ENCODE measurements at regions of chr1 and their contacts with region 1.

Region 1: GRCh38 chr1:92291372-92291999 is 7.3 kb downstream of the GLMN start:
- DNase-seq: peak; percentile 75
- H3K4me3 ChIP-seq: no peak overlapping the region
- H3K27ac ChIP-seq: no peak overlapping the region
- H3K4me1 ChIP-seq: no peaks in the 10 kb centered on the region
- H3K27me3 ChIP-seq: no peaks in the 10 kb centered on the region
- CTCF ChIP-seq: peak; percentile 59 to 62
- POLR2A ChIP-seq: no peak

Region 2: DNA sequence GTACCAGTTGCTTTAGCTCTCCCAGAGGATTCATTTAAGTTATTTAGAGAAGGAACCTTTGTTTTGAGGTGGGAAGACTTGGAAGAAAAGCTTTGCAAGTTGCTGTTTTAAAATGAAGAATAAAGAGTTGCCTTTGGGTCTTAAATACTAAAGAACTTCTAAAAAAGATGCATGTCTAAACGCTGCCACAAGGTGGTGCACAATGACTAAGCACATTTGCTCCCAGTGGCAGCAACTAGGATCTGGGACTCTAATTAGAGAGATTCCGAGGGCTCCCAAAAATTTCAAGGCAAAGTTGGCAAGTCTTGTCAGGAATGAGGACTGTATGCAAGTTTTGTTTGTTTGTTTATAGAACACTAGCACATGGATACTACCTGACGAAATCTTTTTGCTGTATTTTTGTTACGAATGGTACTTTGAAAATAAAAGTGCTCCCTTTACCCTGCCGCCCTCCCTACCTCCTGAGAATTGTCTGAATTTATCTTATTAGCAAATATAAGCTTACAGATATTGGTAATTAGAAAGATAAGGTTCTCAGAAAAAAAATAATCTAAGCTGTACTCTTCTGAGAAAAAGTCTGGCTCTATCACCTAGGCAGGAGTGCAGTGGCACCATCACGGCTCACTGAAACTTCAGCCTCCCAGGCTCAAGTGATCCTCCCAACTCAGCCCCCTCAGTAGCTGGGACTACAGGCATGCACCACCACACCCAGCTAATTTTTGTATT is 1008.6 kb before region 1 on chr1:
- CTCF ChIA-PET with region 1: interaction called, 8 read pairs
- POLR2A ChIA-PET with region 1: no interaction called
- dilution Hi-C with region 1: no loop called
- intact Hi-C with region 1: loop called (anchors 1 kb)
- DNase-seq: peak; percentile 69
- H3K4me3 ChIP-seq: no peak overlapping the region
- H3K27ac ChIP-seq: no peak overlapping the region
- H3K4me1 ChIP-seq: no peaks in the 10 kb centered on the region
- H3K27me3 ChIP-seq: peaks cover 5 to 7% of the 10 kb centered on the region in 2 experiments
- CTCF ChIP-seq: peak; percentile 64 to 66
- POLR2A ChIP-seq: no peak

Region 3: GRCh38 chr1:91924146-91924545 is 367.3 kb before region 1 on chr1:
- CTCF ChIA-PET with region 1: interaction called, 91 read pairs
- POLR2A ChIA-PET with region 1: no interaction called
- dilution Hi-C with region 1: no loop called
- intact Hi-C with region 1: loop called (anchors 1 kb)
- DNase-seq: peak; percentile 37
- H3K4me3 ChIP-seq: no peak overlapping the region
- H3K27ac ChIP-seq: no peak overlapping the region
- H3K4me1 ChIP-seq: peaks cover 2% of the 10 kb centered on the region
- H3K27me3 ChIP-seq: no peaks in the 10 kb centered on the region
- CTCF ChIP-seq: no peak
- POLR2A ChIP-seq: no peak

Region 4: DNA sequence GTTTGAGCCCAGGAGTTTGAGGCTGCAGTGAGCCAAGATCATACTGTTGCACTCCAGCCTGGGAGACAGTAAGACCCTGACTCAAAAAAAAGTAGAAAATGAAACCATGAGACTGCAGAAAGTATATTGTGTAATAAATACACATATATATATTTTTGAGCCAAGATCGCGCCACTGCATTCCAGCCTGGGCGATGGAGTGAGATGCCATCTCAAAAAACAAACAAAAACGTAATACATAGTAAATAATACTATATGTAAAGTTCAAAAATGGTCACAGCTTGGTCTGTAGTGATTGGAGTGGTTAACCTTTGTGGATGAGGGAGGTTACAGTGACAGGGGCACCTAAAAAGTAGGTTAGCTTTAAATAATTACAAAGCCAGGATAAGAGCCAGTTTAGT is 332.5 kb before region 1 on chr1:
- CTCF ChIA-PET with region 1: no interaction called
- POLR2A ChIA-PET with region 1: no interaction called
- dilution Hi-C with region 1: no loop called
- intact Hi-C with region 1: no loop called
- DNase-seq: no peak
- H3K4me3 ChIP-seq: no peak overlapping the region
- H3K27ac ChIP-seq: no peak overlapping the region
- H3K4me1 ChIP-seq: no peaks in the 10 kb centered on the region
- H3K27me3 ChIP-seq: no peaks in the 10 kb centered on the region
- CTCF ChIP-seq: no peak
- POLR2A ChIP-seq: no peak

Region 5: DNA sequence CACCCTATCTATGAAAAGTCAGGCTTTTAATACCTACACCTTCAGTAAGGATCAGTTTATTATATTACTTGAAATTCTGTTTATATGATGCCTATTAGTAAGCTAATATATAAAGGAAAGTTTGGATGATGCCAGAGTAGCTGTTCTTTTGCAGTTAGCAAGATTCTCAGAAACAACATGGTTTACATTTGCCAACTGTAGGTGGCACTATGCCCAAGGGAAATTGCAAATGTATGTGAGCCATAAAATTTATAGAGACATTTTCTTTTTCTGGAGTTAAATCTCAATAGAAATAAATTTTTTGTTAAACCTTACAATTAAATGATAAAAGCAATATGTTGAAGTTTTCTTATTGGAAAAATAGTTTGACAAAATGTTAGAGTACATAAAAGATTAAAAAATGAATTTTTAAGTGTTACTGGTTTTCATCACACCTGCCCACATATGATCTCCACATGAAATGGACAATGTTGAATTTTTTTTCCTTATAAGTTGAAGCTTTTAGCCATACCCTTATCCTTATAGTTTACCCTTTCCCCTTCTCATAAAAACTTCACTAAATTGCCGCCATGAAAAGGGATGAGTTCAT is 293.8 kb before region 1 on chr1:
- CTCF ChIA-PET with region 1: interaction called, 232 read pairs
- POLR2A ChIA-PET with region 1: no interaction called
- dilution Hi-C with region 1: no loop called
- intact Hi-C with region 1: loop called (anchors 1 kb)
- DNase-seq: peak; percentile 59
- H3K4me3 ChIP-seq: no peak overlapping the region
- H3K27ac ChIP-seq: no peak overlapping the region
- H3K4me1 ChIP-seq: no peaks in the 10 kb centered on the region
- H3K27me3 ChIP-seq: no peaks in the 10 kb centered on the region
- CTCF ChIP-seq: peak; percentile 48 to 51
- POLR2A ChIP-seq: no peak

Region 6: DNA sequence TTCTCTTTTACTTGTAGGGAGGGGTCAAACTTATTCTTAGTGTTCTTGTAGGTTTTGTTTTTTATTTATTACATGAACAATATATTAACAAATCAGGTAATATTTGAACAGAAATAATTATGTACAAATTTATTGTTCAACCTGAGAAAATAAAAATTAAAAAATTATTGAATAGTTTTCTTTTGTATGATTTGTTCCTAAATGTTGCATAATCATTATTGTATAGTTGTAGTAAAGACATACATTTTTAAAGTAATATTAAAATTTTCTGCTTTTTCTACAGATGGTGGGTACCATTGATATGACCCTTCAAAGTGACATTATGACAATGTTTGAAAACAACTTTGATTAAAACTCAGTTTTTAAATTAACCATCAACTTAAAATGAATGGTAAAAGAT is 277.6 kb before region 1 on chr1:
- CTCF ChIA-PET with region 1: interaction called, 15 read pairs
- POLR2A ChIA-PET with region 1: no interaction called
- dilution Hi-C with region 1: no loop called
- intact Hi-C with region 1: no loop called
- DNase-seq: no peak
- H3K4me3 ChIP-seq: no peak overlapping the region
- H3K27ac ChIP-seq: no peak overlapping the region
- H3K4me1 ChIP-seq: no peaks in the 10 kb centered on the region
- H3K27me3 ChIP-seq: no peaks in the 10 kb centered on the region
- CTCF ChIP-seq: no peak
- POLR2A ChIP-seq: no peak

Region 7: DNA sequence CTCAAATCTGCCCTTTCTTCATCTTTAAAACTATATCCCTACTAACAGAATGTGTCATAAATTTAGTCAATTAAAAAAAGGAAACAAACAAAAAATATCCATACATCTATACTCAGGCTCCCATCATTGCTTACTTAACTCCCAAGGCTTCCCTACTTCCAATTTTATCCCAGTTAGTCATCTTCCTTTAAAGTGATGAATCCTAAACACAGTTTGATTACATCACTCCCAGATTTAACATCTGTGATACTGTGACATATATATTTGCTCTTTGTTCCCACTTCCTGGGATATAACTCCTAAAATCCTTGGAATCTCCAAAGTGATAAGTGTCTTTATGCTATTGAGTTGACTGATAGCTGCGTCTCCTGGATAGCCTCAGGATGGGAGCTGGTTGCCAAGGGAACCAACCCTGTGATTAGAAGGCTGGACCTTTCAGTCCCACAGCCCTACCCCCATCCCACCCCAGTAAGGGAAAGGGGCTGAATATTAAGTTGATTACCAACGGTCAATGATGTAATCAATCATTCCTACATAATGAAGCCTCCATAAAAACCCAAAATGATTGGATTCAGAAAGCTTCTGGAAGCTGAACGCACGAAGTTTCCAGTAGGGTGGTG is 14.3 kb before region 1 on chr1:
- CTCF ChIA-PET with region 1: interaction called, 37 read pairs
- POLR2A ChIA-PET with region 1: no interaction called
- dilution Hi-C with region 1: no loop called
- intact Hi-C with region 1: no loop called
- DNase-seq: peak; percentile 55
- H3K4me3 ChIP-seq: no peak overlapping the region
- H3K27ac ChIP-seq: peak overlapping the region; percentile 75
- H3K4me1 ChIP-seq: peaks cover 20% of the 10 kb centered on the region
- H3K27me3 ChIP-seq: no peaks in the 10 kb centered on the region
- CTCF ChIP-seq: no peak
- POLR2A ChIP-seq: no peak

Region 8: DNA sequence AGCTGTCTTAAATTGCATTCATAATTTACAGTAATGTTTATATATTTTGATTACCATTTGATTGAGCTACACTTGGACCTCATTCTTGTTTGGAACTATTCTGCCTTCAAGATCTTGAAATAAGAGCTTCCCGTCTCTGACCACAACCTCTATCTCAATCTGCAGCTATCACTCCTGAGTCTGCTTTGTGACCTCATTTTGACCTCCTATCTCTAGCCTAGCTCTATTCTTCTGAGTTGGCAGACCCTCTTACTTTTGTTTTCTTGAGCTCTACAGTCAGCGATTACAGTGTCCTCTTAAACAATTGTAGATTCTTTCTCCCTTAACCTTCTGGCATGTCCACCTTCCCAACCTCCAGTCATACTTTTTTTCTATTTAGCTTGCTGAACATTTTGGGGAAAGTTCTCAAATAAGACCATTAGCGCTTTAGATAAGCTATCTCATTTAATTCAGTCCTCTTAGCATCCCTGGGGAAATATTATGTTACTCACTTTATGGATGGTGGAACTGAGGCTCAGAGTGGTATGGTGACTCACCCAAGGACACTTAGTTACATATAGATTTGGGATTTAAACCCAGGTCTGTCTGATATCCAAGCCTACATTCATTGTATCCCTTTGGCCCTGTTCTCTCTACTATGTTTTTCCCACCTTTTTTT is 26.5 kb after region 1 on chr1:
- CTCF ChIA-PET with region 1: interaction called, 10 read pairs
- POLR2A ChIA-PET with region 1: no interaction called
- dilution Hi-C with region 1: no loop called
- intact Hi-C with region 1: no loop called
- DNase-seq: peak; percentile 96
- H3K4me3 ChIP-seq: no peak overlapping the region
- H3K27ac ChIP-seq: no peak overlapping the region
- H3K4me1 ChIP-seq: peaks cover 7% of the 10 kb centered on the region
- H3K27me3 ChIP-seq: no peaks in the 10 kb centered on the region
- CTCF ChIP-seq: no peak
- POLR2A ChIP-seq: no peak

Region 9: DNA sequence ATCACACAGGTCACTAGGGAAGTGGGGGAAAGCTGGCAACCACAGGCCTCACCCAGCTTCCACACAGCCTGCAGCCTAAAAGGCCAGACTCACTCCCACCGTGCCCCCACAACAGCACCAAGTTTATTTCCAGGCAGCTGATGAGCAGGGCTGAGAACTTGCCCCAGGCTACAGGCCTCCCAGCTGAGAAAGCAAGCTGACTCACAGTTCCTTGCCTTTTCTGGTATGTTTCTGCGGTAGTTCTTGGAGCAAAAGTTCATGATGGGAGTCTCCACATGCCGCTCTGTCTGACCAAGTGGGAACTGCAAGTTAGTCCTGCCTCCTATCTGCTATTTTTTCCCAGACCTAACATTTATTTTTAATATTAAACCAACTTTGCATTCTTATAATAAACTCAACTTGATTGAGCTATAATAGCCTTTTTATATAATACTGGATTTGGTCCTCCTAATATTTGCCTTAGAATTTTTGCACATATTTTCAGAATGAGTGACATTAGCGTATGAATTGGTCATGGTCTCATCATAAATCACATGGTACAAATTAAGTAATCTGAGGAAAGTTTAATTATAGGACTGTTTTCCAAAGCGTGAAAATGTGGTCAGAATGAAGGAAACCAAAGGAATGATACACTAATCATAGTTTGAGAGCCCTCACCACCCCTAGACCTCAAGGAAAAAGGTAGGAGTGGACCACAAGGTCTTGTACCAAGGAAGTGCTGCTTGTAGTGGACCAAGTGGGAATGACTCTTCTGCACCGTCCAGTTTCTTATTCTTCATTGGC is 38.1 kb after region 1 on chr1:
- CTCF ChIA-PET with region 1: no interaction called
- POLR2A ChIA-PET with region 1: no interaction called
- dilution Hi-C with region 1: no loop called
- intact Hi-C with region 1: no loop called
- DNase-seq: no peak
- H3K4me3 ChIP-seq: no peak overlapping the region
- H3K27ac ChIP-seq: no peak overlapping the region
- H3K4me1 ChIP-seq: no peaks in the 10 kb centered on the region
- H3K27me3 ChIP-seq: no peaks in the 10 kb centered on the region
- CTCF ChIP-seq: no peak
- POLR2A ChIP-seq: no peak

Region 10: GRCh38 chr1:92638498-92638897 is 347.0 kb after region 1 on chr1:
- CTCF ChIA-PET with region 1: no interaction called
- POLR2A ChIA-PET with region 1: no interaction called
- dilution Hi-C with region 1: no loop called
- intact Hi-C with region 1: no loop called
- DNase-seq: no peak
- H3K4me3 ChIP-seq: no peak overlapping the region
- H3K27ac ChIP-seq: no peak overlapping the region
- H3K4me1 ChIP-seq: no peaks in the 10 kb centered on the region
- H3K27me3 ChIP-seq: no peaks in the 10 kb centered on the region
- CTCF ChIP-seq: no peak
- POLR2A ChIP-seq: no peak

Measured in endothelial cell of umbilical vein (primary cell).